ENCODE measurements at regions of chr10 and their contacts with region 1.

Region 1: DNA sequence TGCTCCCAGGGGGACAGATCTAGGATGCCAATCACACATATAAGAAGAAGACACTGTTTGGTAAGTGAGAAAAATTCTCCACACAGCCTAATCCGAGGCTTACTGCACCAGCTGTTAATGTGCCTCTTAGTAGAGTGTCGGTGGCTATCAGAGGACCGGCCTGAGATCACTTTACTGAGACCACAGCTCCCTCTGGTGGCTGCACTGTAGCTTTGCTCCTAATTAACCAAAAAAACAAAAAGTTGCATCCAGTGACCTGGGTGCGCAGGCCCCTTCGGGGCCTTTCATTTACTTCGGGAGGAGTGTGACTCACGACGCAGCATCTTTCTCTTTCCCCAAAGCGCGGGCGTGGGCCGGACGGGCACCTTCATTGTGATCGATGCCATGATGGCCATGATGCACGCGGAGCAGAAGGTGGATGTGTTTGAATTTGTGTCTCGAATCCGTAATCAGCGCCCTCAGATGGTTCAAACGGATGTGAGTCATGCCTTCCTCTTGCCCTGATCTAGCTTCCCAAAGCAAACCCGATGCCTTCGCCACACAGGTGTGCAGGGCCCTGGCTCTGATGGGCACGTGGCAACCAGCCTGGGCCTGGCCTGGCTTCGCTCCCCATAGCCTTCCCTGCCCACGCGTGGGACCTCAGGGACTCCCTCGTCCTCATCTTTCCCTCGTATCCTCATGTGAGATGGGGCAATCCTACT is 56.7 kb downstream of the MKI67 start:
- DNase-seq: peak; percentile 84
- H3K4me3 ChIP-seq: no peak overlapping the region
- H3K27ac ChIP-seq: no peak overlapping the region
- H3K4me1 ChIP-seq: peaks cover 25% of the 10 kb centered on the region
- CTCF ChIP-seq: peak; percentile 87

Region 2: GRCh38 chr10:127853868-127854768 is 215.4 kb before region 1 on chr10:
- CTCF ChIA-PET with region 1: interaction called, 3 read pairs
- POLR2A ChIA-PET with region 1: interaction called, 4 read pairs
- intact Hi-C with region 1: loop called (anchors 1 kb)
- DNase-seq: peak; percentile 88
- H3K4me3 ChIP-seq: peak overlapping the region; percentile 54
- H3K27ac ChIP-seq: peak overlapping the region; percentile 63
- H3K4me1 ChIP-seq: peaks cover 44% of the 10 kb centered on the region
- CTCF ChIP-seq: peak; percentile 82

Region 3: DNA sequence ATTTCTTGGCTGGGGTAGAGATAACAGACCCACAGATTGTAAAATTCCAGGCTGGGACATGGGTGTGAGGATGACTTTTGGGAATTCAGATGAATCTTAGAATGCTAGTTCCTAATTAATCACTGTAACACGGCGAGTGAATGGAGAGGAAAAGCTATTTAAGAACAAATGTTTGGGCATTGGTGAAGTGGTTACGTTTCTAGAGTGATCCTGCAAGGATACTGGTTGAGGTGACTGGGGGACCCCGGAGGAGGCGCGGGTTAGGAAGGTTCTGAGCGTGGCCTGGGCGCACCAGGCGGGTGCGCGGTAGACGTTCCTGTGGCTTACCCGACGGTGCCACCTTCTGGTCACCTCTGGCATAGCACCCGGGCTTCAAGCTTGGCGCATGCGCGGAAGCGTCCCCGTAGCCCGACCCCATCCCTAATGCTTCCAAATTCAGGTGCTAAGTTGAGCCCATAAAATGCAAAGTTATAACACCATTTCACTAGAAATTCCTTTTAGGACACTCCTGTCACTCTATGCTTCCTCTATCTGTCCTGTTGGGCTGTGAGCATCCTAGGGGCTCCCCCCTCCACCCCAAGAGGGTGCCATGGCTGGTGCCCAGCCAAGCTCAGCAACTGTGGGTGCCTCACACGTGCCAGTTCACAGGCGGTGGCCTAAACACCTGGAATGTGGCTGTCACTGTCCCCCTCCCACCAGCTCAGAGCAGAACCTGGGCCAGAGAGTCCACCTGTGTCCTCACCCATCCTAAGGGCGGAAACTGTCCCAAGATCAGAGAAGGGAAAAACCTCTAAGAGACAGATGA is 58.1 kb before region 1 on chr10:
- CTCF ChIA-PET with region 1: interaction called, 3 read pairs
- POLR2A ChIA-PET with region 1: interaction called, 3 read pairs
- intact Hi-C with region 1: loop called (anchors 2 kb)
- DNase-seq: peak; percentile 79
- H3K4me3 ChIP-seq: no peak overlapping the region
- H3K27ac ChIP-seq: no peak overlapping the region
- H3K4me1 ChIP-seq: peaks cover 12% of the 10 kb centered on the region
- CTCF ChIP-seq: peak; percentile 93

Region 4: GRCh38 chr10:128035557-128035973 is 33.9 kb before region 1 on chr10:
- CTCF ChIA-PET with region 1: interaction called, 7 read pairs
- POLR2A ChIA-PET with region 1: interaction called, 3 read pairs
- intact Hi-C with region 1: loop called (anchors 1 kb)
- DNase-seq: peak; percentile 40
- H3K4me3 ChIP-seq: no peak overlapping the region
- H3K27ac ChIP-seq: no peak overlapping the region
- H3K4me1 ChIP-seq: no peaks in the 10 kb centered on the region
- CTCF ChIP-seq: peak; percentile 91